ENCODE measurements at regions of chr3 and their contacts with region 1.

Region 1: DNA sequence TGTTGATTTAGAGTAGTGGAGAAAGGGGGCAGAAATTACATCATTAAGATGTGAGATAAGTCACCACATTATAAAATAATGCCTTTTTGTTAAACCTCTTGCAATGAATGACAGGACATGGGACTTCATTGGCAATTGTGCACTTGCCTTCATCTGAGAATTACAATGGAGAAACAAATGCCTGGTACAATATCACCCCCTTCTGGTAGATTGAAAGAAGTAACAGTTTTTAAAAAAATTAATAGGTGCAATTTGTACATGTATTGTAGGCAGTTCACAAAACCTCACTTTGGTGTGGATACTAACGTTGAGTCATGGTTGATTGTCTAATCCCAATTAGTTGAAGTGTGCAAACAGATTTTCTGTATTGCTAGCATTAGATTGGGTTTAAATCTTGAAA is 4.6 kb upstream of the P2RY14 start:
- DNase-seq: no peak
- ATAC-seq: peak; percentile 78
- H3K4me3 ChIP-seq: no peak overlapping the region
- H3K27ac ChIP-seq: no peak overlapping the region
- H3K4me1 ChIP-seq: peaks cover 0 to 1% of the 10 kb centered on the region in 2 donors
- H3K27me3 ChIP-seq: no peaks in the 10 kb centered on the region

Region 2: GRCh38 chr3:151168269-151169094 is 114.4 kb before region 1 on chr3:
- intact Hi-C with region 1: loop called (anchors 2 to 5 kb)
- DNase-seq: peak; percentile 83 to 86
- ATAC-seq: peak; percentile 86
- H3K4me3 ChIP-seq: no peak overlapping the region
- H3K27ac ChIP-seq: no peak overlapping the region
- H3K4me1 ChIP-seq: no peaks in the 10 kb centered on the region
- H3K27me3 ChIP-seq: no peaks in the 10 kb centered on the region

Measured in aorta (tissue), 5 donors.